AG04450 (cell line): ENCODE measurements at regions of chr1 and their contacts with region 1.

Region 1: DNA sequence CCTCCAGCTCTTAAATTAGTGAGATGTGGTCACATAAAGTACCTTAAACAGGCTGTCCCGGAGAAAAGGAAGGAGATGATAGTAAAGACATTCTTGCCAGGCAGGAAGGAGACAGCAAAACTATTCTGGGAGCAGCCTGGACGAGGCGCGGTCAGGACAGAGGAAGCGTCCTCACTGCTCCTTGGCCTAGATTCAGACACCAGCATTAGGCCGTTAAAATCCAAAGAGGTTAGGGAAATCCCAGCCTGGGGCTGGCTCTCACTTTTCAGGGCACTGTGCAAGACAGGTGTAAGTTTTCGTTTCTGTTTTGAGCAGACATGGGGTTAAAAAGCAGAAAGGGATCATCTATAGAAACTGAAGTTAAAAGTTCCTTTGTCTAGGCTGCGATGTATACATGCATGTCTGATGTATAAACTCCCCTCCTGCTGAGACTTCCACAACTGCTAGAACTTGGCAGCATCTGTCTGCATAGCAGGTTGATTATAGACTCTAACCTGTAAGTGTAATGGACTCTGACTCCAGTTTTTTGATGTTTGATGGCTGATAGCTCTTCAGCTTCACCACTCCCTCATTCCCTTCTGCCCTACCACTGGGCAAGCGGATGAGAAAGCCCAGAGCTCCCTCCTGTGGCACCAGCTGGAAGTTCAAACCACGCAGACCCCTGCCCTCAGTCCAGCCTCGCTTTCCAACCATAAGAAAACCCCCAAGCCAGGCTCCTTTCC is 21.5 kb downstream of the STPG1 start:
- DNase-seq: no peak
- H3K4me3 ChIP-seq: no peak overlapping the region
- H3K27ac ChIP-seq: no peak overlapping the region
- H3K27me3 ChIP-seq: no peaks in the 10 kb centered on the region
- CTCF ChIP-seq: peak; percentile 83

Region 2: DNA sequence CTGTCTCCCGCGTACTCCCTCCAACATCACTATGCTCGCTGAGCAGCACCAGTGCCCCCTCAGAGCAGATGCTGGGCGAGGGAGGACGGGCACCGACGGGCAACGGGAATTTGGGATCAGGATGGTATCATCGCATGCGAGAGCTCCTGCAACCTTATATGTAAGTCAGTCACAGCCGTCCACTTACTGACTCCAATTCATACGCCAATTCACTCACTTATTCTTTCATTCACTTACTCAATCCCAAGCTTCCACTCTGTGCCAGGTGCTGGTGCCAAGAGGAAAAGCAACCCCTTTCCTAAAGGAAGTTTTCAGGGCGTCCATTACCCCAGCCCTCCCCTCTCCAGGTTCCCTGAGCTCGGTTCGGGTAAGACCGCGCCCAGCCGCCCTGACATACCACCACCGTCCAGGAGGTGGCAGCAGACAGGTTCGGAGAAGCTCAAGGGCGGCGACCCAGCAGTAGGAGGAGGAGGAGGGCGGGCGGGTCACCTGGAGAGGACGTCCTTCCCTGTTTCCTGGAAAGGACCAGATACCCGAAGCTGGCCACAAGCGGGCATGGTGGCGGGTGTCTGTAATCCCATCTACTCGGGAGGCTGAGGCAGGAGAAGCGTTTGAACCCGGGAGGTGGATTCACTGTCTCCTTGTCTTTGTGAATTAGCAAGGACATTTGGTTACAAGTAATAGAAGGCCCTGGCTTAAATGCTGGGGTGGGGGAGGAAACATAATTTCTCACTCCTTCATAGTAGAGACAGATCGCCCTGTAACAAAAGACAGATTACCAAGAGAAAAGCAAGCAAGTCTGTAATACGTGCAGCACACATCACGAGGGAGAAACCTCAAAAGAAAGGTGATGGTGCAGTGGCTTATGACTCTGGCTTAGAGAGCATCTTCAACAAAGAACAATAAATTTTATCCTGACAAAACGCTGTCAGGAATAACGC is 241.5 kb before region 1 on chr1:
- CTCF ChIA-PET with region 1: interaction called, 63 read pairs
- POLR2A ChIA-PET with region 1: no interaction called
- DNase-seq: peak; percentile 21
- H3K4me3 ChIP-seq: 0 out of 2 replicates have a peak overlapping the region, but pooled peaks have one; percentile 18
- H3K27ac ChIP-seq: no peak overlapping the region
- H3K27me3 ChIP-seq: peaks cover 40% of the 10 kb centered on the region
- CTCF ChIP-seq: peak; percentile 76

Region 3: GRCh38 chr1:24179251-24179840 is 212.7 kb before region 1 on chr1:
- CTCF ChIA-PET with region 1: no interaction called
- POLR2A ChIA-PET with region 1: no interaction called
- DNase-seq: no peak
- H3K4me3 ChIP-seq: no peak overlapping the region
- H3K27ac ChIP-seq: no peak overlapping the region
- H3K27me3 ChIP-seq: peaks cover 34% of the 10 kb centered on the region
- CTCF ChIP-seq: no peak

Region 4: DNA sequence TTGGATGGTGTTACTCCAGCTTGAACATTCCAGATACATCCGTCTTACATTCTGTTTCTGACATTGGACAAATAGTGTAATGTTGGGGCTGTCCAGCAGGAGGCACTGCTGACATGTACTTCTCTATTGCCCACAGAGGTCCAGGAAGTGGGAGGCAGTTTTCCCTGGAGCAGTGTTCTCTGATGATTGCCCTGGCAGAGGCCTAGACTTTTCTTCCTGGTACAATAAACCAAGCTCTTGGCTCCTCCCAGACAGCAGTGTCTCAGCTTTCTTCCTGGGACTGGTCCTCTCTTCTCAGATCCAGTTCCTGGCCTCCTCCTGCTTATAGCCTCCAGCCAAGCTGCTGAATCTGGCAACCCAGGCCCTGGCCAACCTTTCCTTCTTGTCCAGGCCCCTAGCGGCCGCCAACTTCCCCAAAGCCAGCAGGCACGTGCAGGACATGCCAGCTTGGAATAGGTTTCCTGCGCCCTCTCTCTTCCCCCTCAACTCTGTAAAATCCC is 190.1 kb before region 1 on chr1:
- CTCF ChIA-PET with region 1: interaction called, 659 read pairs
- POLR2A ChIA-PET with region 1: interaction called, 7 read pairs
- DNase-seq: peak; percentile 69
- H3K4me3 ChIP-seq: no peak overlapping the region
- H3K27ac ChIP-seq: no peak overlapping the region
- H3K27me3 ChIP-seq: peaks cover 8% of the 10 kb centered on the region
- CTCF ChIP-seq: peak; percentile 88

Region 5: DNA sequence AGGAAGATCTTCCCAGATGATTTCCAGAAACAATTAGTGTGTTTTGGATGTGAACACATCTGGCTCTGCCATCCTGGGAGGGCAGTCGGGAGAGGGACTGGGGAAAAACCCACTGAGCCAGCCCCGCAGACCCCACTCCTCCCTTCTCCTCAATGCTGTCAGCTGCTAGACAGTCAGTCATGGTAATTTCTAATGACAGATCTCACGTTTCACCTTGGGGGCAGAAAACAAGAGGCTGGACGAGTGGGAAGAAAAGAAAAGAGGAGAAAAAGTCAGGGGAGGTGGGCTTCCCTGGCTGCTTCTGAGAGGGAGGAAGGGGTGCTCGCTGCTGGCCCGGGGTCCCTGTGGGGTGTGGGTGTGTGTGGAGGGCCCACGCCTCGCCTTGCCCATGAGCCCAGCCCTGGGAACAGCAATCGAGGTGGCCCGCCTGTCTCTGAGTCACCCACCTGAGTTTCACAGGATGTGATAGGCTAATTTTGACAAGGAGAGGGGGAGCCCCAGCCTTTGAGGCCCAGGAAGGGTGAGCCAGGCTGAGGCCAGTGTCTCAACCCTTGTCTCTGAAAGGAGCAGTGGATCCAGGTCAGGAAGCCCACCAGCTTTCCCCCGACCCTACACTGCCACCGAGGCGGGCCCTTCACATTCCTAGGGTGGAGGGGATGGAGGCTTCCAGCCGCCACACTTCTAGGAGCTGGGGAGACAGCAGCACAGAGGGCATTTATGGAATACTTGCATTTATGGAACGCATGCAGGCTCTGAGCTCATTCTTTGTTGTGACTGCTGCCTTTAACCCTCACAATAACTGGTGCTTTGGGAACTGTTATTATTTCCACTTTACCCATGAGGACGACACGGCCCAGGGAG is 155.9 kb before region 1 on chr1:
- CTCF ChIA-PET with region 1: interaction called, 20 read pairs
- POLR2A ChIA-PET with region 1: no interaction called
- DNase-seq: no peak
- H3K4me3 ChIP-seq: no peak overlapping the region
- H3K27ac ChIP-seq: no peak overlapping the region
- H3K27me3 ChIP-seq: peaks cover 7% of the 10 kb centered on the region
- CTCF ChIP-seq: no peak

Region 6: DNA sequence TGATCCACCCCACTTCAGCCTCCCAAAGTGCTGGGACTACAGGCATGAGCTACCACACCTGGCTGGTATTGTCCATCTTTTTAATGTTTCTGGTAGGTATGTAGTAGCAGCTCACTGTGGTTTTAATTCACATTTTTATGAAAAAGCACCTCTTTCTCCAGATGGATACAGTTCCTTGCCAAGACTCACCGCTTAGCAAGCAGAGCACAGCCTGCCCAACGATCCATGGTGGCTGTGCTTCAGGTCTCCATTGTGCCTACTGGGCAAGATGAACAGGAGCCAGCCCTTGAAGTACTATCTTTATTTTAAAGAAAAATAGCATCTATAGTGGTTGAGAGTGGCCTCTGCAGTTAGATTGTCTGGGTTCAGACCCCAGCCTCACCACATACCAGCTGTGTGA is 110.5 kb before region 1 on chr1:
- CTCF ChIA-PET with region 1: no interaction called
- POLR2A ChIA-PET with region 1: no interaction called
- DNase-seq: no peak
- H3K4me3 ChIP-seq: no peak overlapping the region
- H3K27ac ChIP-seq: no peak overlapping the region
- H3K27me3 ChIP-seq: peaks cover 14% of the 10 kb centered on the region
- CTCF ChIP-seq: no peak

Region 7: DNA sequence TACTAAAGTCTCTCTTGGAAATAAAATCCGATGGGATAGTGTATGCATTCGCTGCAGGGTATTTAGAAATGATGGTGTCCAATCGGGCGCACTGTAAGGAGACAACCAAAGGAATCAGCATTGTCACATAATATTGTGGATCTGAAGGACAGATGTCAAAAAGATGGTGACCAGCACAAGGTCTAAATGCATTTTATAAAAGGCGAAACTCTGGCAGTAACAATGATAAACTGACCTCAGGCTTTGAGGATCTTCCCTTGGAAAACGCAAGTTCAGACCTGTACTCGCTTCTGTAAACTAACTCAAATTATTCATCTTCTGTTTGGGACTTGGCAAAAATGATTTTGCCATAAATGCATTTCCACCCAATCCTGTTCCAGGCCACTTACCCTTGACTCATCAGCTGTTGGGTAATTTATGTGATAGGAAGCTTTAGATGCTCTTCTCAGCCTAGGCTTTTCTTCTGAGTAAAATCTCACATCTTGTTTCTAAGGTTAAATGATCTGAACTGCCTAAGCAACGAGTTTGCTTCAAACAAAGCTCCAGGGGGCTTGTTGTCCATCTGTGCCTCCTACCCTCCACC is 12.2 kb before region 1 on chr1:
- CTCF ChIA-PET with region 1: interaction called, 41 read pairs
- POLR2A ChIA-PET with region 1: no interaction called
- DNase-seq: no peak
- H3K4me3 ChIP-seq: no peak overlapping the region
- H3K27ac ChIP-seq: no peak overlapping the region
- H3K27me3 ChIP-seq: no peaks in the 10 kb centered on the region
- CTCF ChIP-seq: no peak

Region 8: DNA sequence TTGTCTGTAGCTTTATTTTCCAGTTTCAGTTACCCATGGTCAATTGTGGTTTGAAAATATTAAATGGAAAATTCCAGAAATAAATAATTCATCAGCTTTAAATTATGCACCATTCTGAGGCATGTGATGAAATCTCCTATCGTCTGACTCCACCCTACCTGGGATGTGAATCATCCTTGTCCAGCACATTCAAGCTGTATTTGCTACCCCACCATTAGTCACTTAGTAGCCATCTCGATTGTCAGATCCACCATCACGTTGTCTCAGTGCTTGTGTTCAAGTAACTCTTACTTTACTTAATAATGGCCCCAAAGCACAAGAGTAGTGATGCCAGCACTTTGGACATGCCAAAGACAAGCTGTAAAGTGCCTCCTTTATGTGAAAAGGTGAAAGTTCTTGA is 17.5 kb after region 1 on chr1:
- CTCF ChIA-PET with region 1: interaction called, 14 read pairs
- POLR2A ChIA-PET with region 1: interaction called, 5 read pairs
- DNase-seq: peak; percentile 37
- H3K4me3 ChIP-seq: no peak overlapping the region
- H3K27ac ChIP-seq: no peak overlapping the region
- H3K27me3 ChIP-seq: no peaks in the 10 kb centered on the region
- CTCF ChIP-seq: no peak

Region 9: DNA sequence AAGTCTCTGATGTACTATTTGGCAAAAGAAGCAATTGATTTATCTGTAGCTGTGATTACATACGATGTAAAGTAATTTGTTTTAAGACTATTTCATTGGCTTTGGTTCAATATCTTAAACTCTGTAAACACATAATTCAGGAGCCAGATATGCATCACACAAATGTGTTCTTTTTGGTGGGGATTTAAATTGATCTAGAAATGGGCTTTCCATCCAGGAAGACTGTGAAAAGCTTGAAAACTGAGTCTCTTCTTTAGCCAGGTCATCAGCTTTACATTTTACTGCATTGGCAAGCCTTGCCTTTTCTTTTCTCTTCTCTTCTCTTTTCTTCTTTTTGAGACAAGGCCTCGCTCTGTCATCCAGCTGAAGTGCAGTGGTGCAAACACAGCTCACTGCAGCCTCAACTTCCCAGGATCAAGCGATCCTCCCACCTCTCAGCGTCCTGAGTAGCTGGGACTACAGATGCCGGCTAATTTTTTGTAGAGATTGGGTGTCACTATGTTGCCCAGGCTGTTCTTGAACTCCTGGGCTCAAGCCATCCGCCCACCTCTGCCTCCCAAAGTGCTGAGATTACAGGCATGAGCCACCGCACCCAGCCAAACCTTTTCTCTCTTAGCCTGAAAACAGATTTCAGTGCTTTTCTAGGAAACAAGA is 112.0 kb after region 1 on chr1:
- CTCF ChIA-PET with region 1: no interaction called
- POLR2A ChIA-PET with region 1: no interaction called
- DNase-seq: no peak
- H3K4me3 ChIP-seq: no peak overlapping the region
- H3K27ac ChIP-seq: no peak overlapping the region
- H3K27me3 ChIP-seq: peaks cover 21% of the 10 kb centered on the region
- CTCF ChIP-seq: no peak

Region 10: GRCh38 chr1:24586970-24587820 is 195.2 kb after region 1 on chr1:
- CTCF ChIA-PET with region 1: interaction called, 44 read pairs
- POLR2A ChIA-PET with region 1: no interaction called
- DNase-seq: peak; percentile 6
- H3K4me3 ChIP-seq: no peak overlapping the region
- H3K27ac ChIP-seq: no peak overlapping the region
- H3K27me3 ChIP-seq: peaks cover 48% of the 10 kb centered on the region
- CTCF ChIP-seq: peak; percentile 80